PC-3 (cell line): ENCODE measurements at regions of chr11 and their contacts with region 1.

Region 1: GRCh38 chr11:28107748-28108618 is at the starts of genes KIF18A and METTL15:
- DNase-seq: peak; percentile 99
- ATAC-seq: peak; percentile 82
- H3K4me3 ChIP-seq: peak within 1 kb of the TSS; percentile 75
- H3K27ac ChIP-seq: peak within 1 kb of the TSS; percentile 64
- H3K4me1 ChIP-seq: peaks cover 62% of the 10 kb centered on the region
- H3K27me3 ChIP-seq: no peaks in the 10 kb centered on the region
- CTCF ChIP-seq: no peak
- total RNA-seq, gene KIF18A: 11.6 and 15.3 TPM in 2 replicates
- total RNA-seq, gene METTL15: 5.8 and 12.4 TPM in 2 replicates

Region 2: GRCh38 chr11:27718346-27718852 is 389.6 kb before region 1 on chr11:
- CTCF ChIA-PET with region 1: interaction called, 3 read pairs
- POLR2A ChIA-PET with region 1: interaction called, 6 read pairs
- intact Hi-C with region 1: loop called (anchors 5 kb)
- DNase-seq: peak; percentile 79
- ATAC-seq: peak; percentile 86
- H3K4me3 ChIP-seq: peak overlapping the region; percentile 97
- H3K27ac ChIP-seq: peak overlapping the region; percentile 69
- H3K4me1 ChIP-seq: peaks cover 6% of the 10 kb centered on the region; the same call in 1 of the 2 replicates
- H3K27me3 ChIP-seq: no peaks in the 10 kb centered on the region
- CTCF ChIP-seq: no peak

Region 3: GRCh38 chr11:27904358-27905055 is 203.5 kb before region 1 on chr11:
- CTCF ChIA-PET with region 1: no interaction called
- POLR2A ChIA-PET with region 1: no interaction called
- intact Hi-C with region 1: loop called (anchors 5 kb)
- DNase-seq: peak; percentile 85
- ATAC-seq: peak; percentile 78
- H3K4me3 ChIP-seq: peak overlapping the region; percentile 39; the same call in 1 of the 2 replicates
- H3K27ac ChIP-seq: peak overlapping the region; percentile 97
- H3K4me1 ChIP-seq: peaks cover 53% of the 10 kb centered on the region
- H3K27me3 ChIP-seq: no peaks in the 10 kb centered on the region
- CTCF ChIP-seq: no peak

Region 4: DNA sequence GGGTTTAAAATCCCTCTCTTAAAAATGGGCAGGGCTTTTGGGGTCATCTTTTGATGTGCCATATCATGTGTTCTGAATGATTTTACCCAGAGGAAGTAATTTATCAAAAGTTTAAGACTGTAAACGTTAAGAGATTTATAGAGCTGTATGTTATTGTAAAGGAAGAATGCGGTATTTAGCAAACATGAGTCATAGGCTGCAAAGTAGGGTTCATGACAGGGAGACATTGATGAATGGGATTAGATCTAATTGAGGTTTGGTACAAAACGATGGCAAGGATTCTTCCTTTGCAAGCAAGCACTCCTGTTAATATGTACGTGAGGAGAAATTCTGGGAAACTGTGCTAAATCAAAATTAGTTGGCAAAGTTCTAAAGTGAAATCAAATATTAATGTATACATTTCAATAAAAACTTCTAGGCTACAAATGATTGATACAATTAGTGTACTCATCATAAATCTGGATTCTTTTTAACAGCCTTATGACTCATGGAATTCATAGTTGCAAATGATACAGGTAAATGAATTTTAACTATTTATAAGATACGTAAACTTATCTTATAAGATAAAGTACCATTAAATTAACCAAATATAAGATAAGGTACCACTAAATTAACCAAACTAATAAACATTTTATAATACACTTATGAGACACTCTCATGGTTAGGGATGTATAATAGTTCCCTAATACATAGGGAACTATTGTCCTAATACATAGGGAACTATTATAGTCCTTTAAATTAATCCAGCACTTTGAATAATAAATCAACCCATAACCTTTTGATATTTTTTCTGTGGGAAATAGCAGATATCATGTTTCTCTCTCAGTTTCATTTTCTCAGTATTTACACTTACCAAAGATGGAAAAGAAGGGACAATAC is 58.4 kb before region 1 on chr11:
- CTCF ChIA-PET with region 1: no interaction called
- POLR2A ChIA-PET with region 1: no interaction called
- intact Hi-C with region 1: loop called (anchors 2 kb)
- DNase-seq: peak; percentile 90
- ATAC-seq: peak; percentile 86
- H3K4me3 ChIP-seq: no peak overlapping the region
- H3K27ac ChIP-seq: peak overlapping the region; percentile 87
- H3K4me1 ChIP-seq: peaks cover 28% of the 10 kb centered on the region
- H3K27me3 ChIP-seq: no peaks in the 10 kb centered on the region
- CTCF ChIP-seq: no peak

Region 5: DNA sequence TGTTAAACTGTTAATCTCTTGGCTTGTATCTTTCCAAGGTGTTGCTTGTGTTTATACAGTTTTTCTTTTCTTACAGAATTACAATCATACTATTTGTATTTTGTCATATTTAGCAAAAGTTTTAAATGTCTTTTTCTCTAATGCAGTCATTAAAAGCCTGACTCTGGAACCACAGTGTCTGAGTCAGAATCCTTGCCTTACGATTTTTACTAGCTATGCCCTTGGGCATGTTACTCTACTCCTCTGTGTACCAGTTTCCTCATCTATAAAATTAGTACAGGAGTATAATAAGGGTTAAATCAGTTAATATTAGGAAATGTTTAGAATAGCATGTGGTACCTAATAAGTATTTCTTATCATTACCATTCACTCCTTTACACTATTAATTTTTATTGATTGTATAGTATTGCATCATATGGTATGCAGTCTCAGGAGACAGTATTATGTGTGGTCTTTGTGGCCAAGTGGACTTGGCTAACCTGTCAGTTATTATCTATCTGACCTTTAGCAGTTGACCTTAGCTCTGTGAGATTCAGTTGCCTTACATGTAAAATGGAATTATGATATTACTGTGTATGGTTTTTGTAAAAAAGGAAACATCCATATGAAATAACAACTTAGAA is 68.4 kb after region 1 on chr11:
- CTCF ChIA-PET with region 1: no interaction called
- POLR2A ChIA-PET with region 1: interaction called, 16 read pairs
- intact Hi-C with region 1: no loop called
- DNase-seq: peak; percentile 71
- ATAC-seq: peak; percentile 94
- H3K4me3 ChIP-seq: no peak overlapping the region
- H3K27ac ChIP-seq: no peak overlapping the region
- H3K4me1 ChIP-seq: peaks cover 7% of the 10 kb centered on the region; the same call in 1 of the 2 replicates
- H3K27me3 ChIP-seq: no peaks in the 10 kb centered on the region
- CTCF ChIP-seq: no peak

Region 6: DNA sequence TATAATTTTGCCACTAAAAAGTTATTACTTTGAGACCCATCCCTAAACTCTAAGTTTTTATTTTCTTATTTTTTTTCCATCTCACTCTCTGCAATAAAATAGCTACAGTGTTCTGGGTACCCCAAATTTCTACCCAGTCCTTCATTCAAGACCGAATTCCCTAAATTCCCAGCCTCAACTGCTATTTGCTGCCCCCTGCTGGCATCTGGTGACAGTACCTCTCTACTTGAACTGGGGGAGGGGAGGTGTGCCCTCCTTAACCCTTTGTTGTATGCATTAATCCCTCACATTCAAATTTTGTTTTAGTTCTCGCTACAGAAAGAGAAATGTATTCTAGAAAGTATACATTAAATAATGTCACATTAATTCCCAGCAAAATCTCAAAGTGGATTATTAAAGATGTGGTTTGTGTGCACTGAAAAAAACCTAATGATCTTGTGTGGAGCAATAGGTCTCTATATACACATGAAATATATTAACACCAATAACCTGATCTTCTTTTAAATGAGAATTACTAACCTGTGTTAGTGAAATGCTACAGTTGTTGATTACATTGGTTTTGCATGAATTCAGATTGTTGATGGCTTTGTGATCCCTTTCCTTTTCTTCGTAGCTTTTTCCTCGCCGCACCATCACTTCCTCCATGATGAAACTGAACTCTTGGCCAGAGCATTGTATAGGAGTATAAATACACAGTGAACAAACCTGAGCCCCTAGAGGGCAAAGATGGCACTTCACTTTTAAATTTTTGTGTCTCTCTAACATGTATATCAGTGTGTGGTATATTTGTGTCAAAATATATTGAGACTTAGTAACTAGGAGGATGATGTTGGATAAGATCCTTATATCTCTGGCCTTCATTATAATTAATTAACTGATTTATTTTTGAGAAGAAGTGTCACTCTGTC is 590.2 kb after region 1 on chr11:
- CTCF ChIA-PET with region 1: no interaction called
- POLR2A ChIA-PET with region 1: no interaction called
- intact Hi-C with region 1: loop called (anchors 10 kb)
- DNase-seq: peak; percentile 76
- ATAC-seq: no peak
- H3K4me3 ChIP-seq: no peak overlapping the region
- H3K27ac ChIP-seq: no peak overlapping the region
- H3K4me1 ChIP-seq: peaks cover 24% of the 10 kb centered on the region
- H3K27me3 ChIP-seq: no peaks in the 10 kb centered on the region
- CTCF ChIP-seq: peak; percentile 90